ENCODE measurements at regions of chr9 and their contacts with region 1.

Region 1: DNA sequence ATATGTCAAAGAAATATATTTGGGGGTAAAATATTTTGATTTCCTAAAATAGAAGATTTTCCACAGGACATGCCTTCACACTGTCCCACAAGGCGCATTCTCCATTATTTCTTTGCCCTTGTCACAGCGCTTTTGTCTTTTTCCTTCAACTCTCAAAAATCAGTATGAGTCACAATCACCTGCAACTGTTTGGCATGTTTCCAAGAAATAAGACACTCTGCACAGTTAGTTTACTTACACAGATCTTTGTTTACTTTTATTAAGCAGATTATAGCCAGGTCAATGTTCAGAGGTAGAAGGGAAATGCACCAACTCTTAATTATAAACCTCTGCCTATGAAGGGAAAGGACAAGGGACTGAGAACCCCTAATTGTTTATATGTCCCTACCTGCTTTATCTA is 9.5 kb downstream of the CEMIP2 start:
- DNase-seq: no peak
- H3K4me3 ChIP-seq: no peak overlapping the region
- CTCF ChIP-seq: no peak

Region 2: DNA sequence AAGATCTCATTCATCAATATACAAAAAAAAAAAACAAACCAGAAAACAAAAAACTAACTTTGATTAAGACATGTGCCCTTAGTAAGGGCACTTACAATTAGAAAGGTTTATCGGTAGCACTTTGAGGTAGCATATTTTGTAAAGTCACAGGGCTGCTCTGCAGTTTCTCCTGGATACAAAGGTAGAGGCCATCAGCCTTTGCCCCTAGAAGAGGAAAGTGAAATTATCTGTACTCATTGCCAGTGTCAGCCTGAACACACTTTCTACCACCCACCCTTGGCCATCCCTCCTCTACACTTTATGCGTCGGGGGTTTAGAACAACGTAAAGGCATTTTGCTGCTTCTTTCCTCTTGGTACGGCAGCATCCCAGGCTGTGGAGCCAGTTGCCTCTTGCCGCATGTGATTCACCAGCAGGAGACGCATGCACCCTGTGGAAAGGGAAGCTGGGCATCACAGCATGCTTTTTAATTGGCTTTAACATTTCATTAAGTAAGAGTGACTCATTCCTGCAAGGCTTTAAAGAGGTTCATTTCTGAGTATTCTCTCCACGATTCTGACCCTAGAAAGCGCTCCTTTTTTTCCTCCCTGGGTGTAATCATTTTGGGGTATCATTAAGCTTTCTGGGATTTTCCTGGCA is 75.1 kb before region 1 on chr9:
- in situ Hi-C with region 1: loop called (anchors 10 kb)
- DNase-seq: no peak
- H3K4me3 ChIP-seq: no peak overlapping the region
- CTCF ChIP-seq: peak; percentile 67

Measured in astrocyte of the cerebellum (primary cell).